GM23248 (cell line): ENCODE measurements at regions of chr1 and their contacts with region 1.

Region 1: DNA sequence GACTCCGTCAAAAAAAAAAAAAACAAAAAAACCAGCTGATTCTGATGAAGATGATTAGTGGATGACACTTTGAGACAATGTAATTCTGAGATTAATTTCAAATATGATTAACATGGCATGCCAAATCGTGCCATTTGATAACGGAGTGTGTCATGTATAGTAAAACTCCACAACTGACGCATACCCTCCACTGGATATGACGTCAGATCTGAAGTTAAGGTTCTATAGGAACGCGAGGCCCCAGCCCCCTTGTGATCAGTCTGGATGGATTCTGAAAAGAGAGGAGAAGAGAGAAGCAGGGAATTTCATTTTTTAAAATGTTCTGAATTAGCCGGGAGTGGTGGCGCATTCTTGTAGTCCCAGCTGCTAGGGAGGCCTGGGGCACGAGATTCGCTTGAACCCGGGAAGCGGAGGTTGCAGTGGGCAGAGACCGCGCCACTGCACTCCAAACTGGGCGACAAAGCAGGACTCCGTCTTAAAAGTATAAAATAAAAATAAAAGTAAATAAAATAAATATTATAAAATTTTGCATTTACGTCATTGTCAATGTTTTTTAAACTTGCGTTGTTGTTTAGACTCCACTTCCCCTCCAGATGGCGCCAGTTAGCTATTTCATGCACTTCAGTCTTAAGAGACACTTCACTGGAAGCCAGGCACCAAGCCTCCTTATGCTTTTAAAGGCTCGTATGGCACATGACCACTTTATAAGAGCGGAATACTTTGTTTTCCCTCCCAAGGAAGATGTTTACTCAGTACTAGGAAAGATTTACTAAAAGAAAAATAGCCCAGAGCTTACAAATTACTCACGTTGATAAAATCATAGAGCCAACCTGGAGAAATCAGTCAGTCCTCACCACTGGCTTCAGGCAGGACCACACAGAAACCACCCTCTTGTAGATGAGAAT is 65.5 kb downstream of the UBE2U start:
- DNase-seq: peak; percentile 87
- H3K4me3 ChIP-seq: 0 out of 2 replicates have a peak overlapping the region, but pooled peaks have one; percentile 32
- H3K27ac ChIP-seq: no peak overlapping the region
- H3K4me1 ChIP-seq: no peaks in the 10 kb centered on the region
- H3K27me3 ChIP-seq: peaks cover 8% of the 10 kb centered on the region; the same call in 1 of the 2 replicates

Region 2: DNA sequence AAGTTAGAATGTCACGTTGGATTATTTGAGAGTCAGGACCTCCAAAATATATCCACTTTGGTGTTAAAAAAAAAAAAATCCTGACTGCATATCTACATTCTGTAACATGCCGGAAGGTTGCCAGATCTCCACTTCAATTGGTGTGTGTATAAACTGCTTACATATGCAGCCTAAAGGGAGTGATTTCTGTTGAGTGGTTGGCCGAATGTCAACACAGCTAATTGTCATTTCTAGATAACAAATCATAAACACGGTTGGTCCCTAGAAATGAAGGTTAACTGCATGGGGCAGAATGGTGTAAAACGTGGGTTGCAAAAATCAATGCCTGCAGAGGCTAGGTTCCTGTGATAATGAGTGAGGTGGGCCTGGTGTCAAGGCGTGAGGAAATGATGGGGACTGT is 510.1 kb before region 1 on chr1:
- in situ Hi-C with region 1: no loop called
- DNase-seq: no peak
- H3K4me3 ChIP-seq: no peak overlapping the region
- H3K27ac ChIP-seq: no peak overlapping the region
- H3K4me1 ChIP-seq: no peaks in the 10 kb centered on the region
- H3K27me3 ChIP-seq: no peaks in the 10 kb centered on the region

Region 3: DNA sequence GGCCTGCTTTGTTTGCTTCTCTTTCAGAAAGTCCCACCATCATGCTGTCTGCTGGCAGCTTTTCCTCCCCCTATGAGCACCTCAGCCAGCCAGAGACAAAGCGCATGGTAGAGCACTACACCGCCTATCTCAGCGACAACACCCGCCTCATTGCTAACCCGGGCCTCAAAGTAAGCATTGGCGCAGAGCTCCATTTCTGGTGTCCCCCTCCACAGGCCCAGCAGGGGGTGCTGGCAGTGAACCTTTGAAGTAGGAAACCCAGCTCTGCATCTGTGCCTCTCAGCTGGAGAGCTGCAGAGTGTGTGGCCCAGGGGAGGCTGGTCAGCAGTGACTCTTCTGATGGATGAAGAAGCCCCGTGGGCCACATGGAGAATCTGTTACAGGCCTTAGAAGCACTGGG is 394.8 kb after region 1 on chr1:
- in situ Hi-C with region 1: loop called (anchors 25 kb)
- DNase-seq: peak; percentile 4
- H3K4me3 ChIP-seq: no peak overlapping the region
- H3K27ac ChIP-seq: no peak overlapping the region
- H3K4me1 ChIP-seq: no peaks in the 10 kb centered on the region
- H3K27me3 ChIP-seq: no peaks in the 10 kb centered on the region

Region 4: DNA sequence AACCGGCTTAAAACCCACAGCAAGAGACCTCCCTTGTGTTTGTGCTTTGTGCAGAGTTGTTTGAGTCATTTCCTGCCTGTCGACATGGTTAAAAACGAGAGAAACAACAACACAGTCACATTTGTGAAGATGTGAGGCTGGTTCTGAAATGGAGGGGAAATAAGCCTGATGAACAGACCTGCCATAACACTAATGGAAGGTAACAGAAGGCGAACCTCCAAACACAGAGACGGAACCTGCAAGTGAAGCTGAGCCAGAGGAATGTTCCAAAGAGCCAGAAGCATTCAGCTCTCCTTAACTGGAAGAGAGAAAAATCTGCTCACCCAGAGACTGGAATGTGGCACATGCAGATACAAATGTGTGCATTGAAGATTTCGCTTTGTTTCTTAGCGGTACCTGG is 422.7 kb after region 1 on chr1:
- in situ Hi-C with region 1: no loop called
- DNase-seq: peak; percentile 13
- H3K4me3 ChIP-seq: no peak overlapping the region
- H3K27ac ChIP-seq: no peak overlapping the region
- H3K4me1 ChIP-seq: peaks cover 15% of the 10 kb centered on the region; the same call in 1 of the 2 replicates
- H3K27me3 ChIP-seq: no peaks in the 10 kb centered on the region